ENCODE measurements at regions of chr11 and their contacts with region 1.

Region 1: DNA sequence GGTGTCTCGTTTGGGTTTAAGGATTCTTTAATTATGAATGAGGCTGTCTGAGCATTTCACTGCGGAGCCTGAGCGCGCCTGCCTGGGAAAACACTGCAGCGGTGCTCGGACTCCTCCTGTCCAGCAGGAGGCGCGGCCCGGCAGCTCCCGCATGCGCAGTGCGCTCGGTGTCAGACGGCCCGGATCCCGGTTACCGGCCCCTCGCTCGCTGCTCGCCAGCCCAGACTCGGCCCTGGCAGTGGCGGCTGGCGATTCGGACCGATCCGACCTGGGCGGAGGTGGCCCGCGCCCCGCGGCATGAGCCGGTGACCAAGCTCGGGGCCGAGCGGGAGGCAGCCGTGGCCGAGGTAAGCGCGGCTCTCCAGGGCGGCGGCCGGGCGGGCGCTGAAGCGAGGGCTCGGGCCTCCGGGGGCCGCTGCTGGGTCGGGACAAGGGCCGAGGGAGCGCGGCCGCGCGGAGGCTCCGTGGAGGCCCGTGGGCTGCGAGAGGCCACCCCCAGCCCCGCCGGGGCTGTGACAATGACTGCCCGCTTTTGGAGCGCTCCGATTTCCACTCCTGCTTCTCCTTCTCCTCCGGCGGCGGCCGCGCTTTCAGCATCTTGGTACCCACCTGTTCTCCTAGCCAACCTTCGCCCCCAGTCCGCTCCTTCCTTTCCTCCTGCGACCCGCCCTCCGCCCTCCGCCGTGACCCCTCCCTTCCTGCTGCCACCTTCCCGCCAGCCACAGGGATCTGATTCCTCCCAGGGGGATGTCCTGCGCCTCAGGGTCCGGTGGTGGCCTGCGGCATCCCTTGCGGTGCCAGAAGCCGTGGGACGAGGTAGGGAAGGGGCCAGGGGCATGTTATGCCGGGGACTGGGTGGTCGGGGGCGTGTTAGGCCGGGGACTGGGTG is at the start of gene EXT2:
- DNase-seq: peak; percentile 84
- H3K4me3 Mint-ChIP-seq: peak within 1 kb of the TSS; percentile 87
- H3K27ac Mint-ChIP-seq: no peak within 1 kb of the TSS
- H3K4me1 Mint-ChIP-seq: peaks cover 24% of the 10 kb centered on the region
- H3K27me3 Mint-ChIP-seq: no peaks in the 10 kb centered on the region
- total RNA-seq, gene EXT2: 23.8 to 26.2 TPM

Region 2: GRCh38 chr11:44065841-44066731 is 29.7 kb before region 1 on chr11 and contains the start of gene ACCS:
- CTCF ChIA-PET with region 1: interaction called, 10 read pairs
- intact Hi-C with region 1: loop called (anchors 1 kb)
- DNase-seq: peak; percentile 92
- H3K4me3 Mint-ChIP-seq: peak within 1 kb of the TSS; percentile 88
- H3K27ac Mint-ChIP-seq: peak within 1 kb of the TSS; percentile 93
- H3K4me1 Mint-ChIP-seq: peaks cover 20% of the 10 kb centered on the region
- H3K27me3 Mint-ChIP-seq: no peaks in the 10 kb centered on the region
- total RNA-seq, gene ACCS: 16.2 to 16.6 TPM

Region 3: DNA sequence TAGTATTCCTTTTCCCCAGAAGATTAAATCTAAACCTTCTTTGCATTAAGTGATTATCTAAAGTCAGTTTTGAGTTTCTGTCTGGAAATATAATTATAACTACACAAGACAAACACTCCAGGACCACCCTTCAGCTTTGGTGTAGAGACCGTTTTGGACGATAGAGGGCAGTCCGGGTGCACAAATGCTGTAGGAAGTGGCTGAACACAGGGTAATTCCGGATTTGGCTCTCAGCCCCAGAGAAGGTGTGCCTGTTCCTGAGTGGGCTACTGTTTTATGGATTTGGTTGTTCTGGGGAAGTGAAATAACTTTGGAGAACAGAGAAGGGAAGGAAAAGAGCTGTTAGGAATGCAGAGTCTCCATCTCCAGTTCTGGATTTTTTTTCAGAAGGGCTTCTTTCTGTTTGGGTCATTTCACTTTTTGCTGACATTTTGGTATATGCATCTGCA is 14.5 kb after region 1 on chr11:
- CTCF ChIA-PET with region 1: interaction called, 60 read pairs
- intact Hi-C with region 1: loop called (anchors 1 kb)
- DNase-seq: peak; percentile 76
- H3K4me3 Mint-ChIP-seq: no peak overlapping the region
- H3K27ac Mint-ChIP-seq: no peak overlapping the region
- H3K4me1 Mint-ChIP-seq: peaks cover 10% of the 10 kb centered on the region
- H3K27me3 Mint-ChIP-seq: no peaks in the 10 kb centered on the region

Region 4: GRCh38 chr11:44190868-44191200 is 95.1 kb after region 1 on chr11:
- CTCF ChIA-PET with region 1: no interaction called
- intact Hi-C with region 1: loop called (anchors 5 kb)
- DNase-seq: no peak
- H3K4me3 Mint-ChIP-seq: no peak overlapping the region
- H3K27ac Mint-ChIP-seq: no peak overlapping the region
- H3K4me1 Mint-ChIP-seq: peaks cover 32% of the 10 kb centered on the region
- H3K27me3 Mint-ChIP-seq: no peaks in the 10 kb centered on the region

Region 5: GRCh38 chr11:44538375-44539054 is 442.8 kb after region 1 on chr11:
- CTCF ChIA-PET with region 1: interaction called, 9 read pairs
- intact Hi-C with region 1: loop called (anchors 1 kb)
- DNase-seq: peak; percentile 81
- H3K4me3 Mint-ChIP-seq: no peak overlapping the region
- H3K27ac Mint-ChIP-seq: no peak overlapping the region
- H3K4me1 Mint-ChIP-seq: peaks cover 2% of the 10 kb centered on the region
- H3K27me3 Mint-ChIP-seq: no peaks in the 10 kb centered on the region